ENCODE measurements at regions of chr16 and their contacts with region 1.

Region 1: GRCh38 chr16:89490387-89491237 is at the start of gene ANKRD11:
- DNase-seq: peak; percentile 98 to 99 (median 99)
- H3K4me3 ChIP-seq: peak within 1 kb of the TSS; percentile 99
- H3K27ac ChIP-seq: peak within 1 kb of the TSS; percentile 97 to 100
- H3K4me1 ChIP-seq: peaks cover 19% of the 10 kb centered on the region
- H3K27me3 ChIP-seq: no peaks in the 10 kb centered on the region
- CTCF ChIP-seq: no peak
- EP300 ChIP-seq: peak; percentile 79
- POLR2A ChIP-seq: peak; percentile 91
- total RNA-seq, gene ANKRD11: 56.1 to 188 (median 123) TPM

Region 2: GRCh38 chr16:89241187-89242007 is 249.2 kb before region 1 on chr16:
- intact Hi-C with region 1: loop called in 1 of 4 experiments (anchors 10 kb)
- DNase-seq: peak; percentile 71 to 84 (median 81)
- H3K4me3 ChIP-seq: peak overlapping the region; percentile 49
- H3K27ac ChIP-seq: peak overlapping the region; percentile 88 to 93
- H3K4me1 ChIP-seq: no peaks in the 10 kb centered on the region
- H3K27me3 ChIP-seq: no peaks in the 10 kb centered on the region
- CTCF ChIP-seq: no peak
- EP300 ChIP-seq: no peak
- POLR2A ChIP-seq: peak; percentile 97

Region 3: DNA sequence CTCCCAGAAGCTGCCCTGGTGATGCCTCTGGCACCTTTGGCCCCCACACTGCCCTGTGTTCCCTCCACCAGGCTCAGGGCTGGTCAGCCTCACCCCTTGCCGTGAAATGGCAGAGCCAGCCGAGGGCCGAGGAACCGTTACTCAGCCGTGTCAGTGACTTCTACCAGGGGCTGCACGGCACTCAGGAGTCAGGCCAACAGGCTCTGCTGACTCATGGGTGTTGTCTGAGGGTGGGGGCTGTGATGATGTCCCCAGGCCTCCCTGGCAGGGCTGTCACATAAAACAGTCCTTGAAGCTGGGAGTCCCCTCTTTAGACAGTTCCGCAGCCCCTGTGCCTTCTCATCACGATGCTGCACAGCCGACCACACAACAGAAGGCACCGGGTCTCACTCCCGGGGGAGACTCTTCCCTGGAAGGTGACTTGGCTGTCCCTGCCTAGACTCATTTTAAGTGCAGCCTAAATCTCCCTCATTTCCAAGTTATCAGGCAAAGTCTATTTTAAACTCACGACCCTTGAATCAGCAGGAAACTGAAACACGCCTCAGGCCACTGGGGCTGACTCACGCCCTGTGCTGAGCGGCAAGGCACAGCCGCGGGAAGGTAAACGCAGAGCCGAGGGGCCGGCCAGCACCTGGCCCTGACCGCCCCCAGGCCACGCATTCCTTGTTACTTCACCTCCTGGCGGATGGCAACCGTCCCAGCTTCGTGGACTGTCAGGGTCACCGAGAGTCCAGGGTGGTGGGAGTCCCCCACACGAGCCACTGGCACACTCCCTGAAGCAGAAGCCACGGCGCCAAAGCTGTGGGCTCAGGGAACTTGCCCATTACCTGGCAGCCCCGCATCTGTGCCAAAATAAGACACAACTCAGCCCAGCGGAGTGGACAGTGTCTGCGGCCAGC is 170.5 kb before region 1 on chr16:
- intact Hi-C with region 1: loop called in 1 of 4 experiments (anchors 10 kb)
- DNase-seq: peak in 4 of 5 donors; percentile 57 to 73 (median 60)
- H3K4me3 ChIP-seq: peak overlapping the region; percentile 6
- H3K27ac ChIP-seq: peak overlapping the region; percentile 2 to 44
- H3K4me1 ChIP-seq: peaks cover 50% of the 10 kb centered on the region
- H3K27me3 ChIP-seq: no peaks in the 10 kb centered on the region
- CTCF ChIP-seq: no peak
- EP300 ChIP-seq: no peak
- POLR2A ChIP-seq: no peak